ENCODE measurements at regions of chr17 and their contacts with region 1.

Region 1: DNA sequence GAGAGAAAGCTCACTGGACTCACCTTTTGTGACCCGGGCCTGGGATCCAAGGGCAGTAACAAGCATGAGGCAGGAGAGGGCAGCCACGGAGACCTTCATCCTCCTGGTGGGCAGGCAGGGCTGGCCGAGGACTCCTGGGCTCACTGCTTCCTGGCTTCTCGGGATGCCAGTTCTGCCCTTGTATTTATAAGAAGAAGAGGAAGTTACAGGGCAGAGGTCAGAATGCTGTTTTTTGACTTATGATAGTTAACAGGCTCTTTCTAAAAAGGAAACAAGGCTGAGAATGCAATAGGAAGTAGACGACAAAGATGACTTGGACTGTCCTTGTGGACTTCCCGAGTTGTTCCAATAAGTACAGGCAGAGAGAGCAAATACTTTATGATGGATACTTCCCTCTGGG is at the start of gene CCL23:
- DNase-seq: no peak
- H3K4me3 ChIP-seq: no peak within 1 kb of the TSS
- H3K27ac ChIP-seq: no peak within 1 kb of the TSS
- H3K4me1 ChIP-seq: peaks cover 0 to 5% (median 0%) of the 10 kb centered on the region in 4 donors
- H3K27me3 ChIP-seq: peaks cover 0 to 9% (median 0%) of the 10 kb centered on the region in 4 donors
- CTCF ChIP-seq: no peak
- EP300 ChIP-seq: no peak
- POLR2A ChIP-seq: no peak
- total RNA-seq, gene CCL23: 1.3 to 9.6 (median 2.5) TPM

Region 2: DNA sequence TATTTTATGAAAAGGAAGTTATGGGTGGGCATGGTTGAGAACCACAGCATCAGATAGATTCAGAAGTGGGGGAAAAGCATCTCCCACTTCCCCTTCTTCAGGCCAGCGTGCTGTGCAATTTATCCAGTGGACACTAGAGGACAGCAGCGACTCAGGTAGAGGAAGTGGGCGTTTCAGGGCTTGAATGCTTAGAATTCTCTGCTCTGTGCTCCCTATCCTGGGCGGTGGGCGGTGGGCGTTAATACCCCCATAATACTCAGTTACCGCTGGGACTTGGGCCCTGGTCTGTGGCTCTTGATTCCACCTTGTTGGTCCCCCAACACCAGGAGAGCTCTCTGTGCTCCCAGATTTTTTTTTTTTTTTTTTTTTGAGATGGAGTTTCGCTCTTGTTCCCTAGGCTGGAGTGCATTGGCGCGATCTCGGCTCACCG is 70.6 kb before region 1 on chr17:
- intact Hi-C with region 1: no loop called
- DNase-seq: no peak
- H3K4me3 ChIP-seq: peak overlapping the region in 1 of 4 donors; percentile 14
- H3K27ac ChIP-seq: no peak overlapping the region
- H3K4me1 ChIP-seq: no peaks in the 10 kb centered on the region
- H3K27me3 ChIP-seq: no peaks in the 10 kb centered on the region
- CTCF ChIP-seq: peak; percentile 49 to 83 (median 50)
- EP300 ChIP-seq: no peak
- POLR2A ChIP-seq: no peak

Region 3: GRCh38 chr17:36066365-36066985 is 48.7 kb after region 1 on chr17:
- intact Hi-C with region 1: loop called (anchors 10 kb)
- DNase-seq: no peak
- H3K4me3 ChIP-seq: no peak overlapping the region
- H3K27ac ChIP-seq: no peak overlapping the region
- H3K4me1 ChIP-seq: no peaks in the 10 kb centered on the region
- H3K27me3 ChIP-seq: peaks cover 0 to 8% (median 0%) of the 10 kb centered on the region in 4 donors
- CTCF ChIP-seq: no peak
- EP300 ChIP-seq: no peak
- POLR2A ChIP-seq: no peak

Measured in esophagus muscularis mucosa (tissue), 4 donors.